Panc1 (cell line): ENCODE measurements at regions of chr20 and their contacts with region 1.

Region 1: GRCh38 chr20:1838556-1839279 is 56.5 kb upstream of the SIRPA start:
- DNase-seq: no peak
- ATAC-seq: no peak
- H3K4me3 ChIP-seq: no peak overlapping the region
- H3K27ac ChIP-seq: no peak overlapping the region
- H3K4me1 ChIP-seq: no peaks in the 10 kb centered on the region
- H3K27me3 ChIP-seq: no peaks in the 10 kb centered on the region
- CTCF ChIP-seq: no peak

Region 2: GRCh38 chr20:1685304-1686052 is 153.2 kb before region 1 on chr20:
- CTCF ChIA-PET with region 1: no interaction called
- POLR2A ChIA-PET with region 1: no interaction called
- in situ Hi-C with region 1: no loop called
- intact Hi-C with region 1: no loop called
- DNase-seq: no peak
- ATAC-seq: no peak
- H3K4me3 ChIP-seq: no peak overlapping the region
- H3K27ac ChIP-seq: no peak overlapping the region
- H3K4me1 ChIP-seq: no peaks in the 10 kb centered on the region
- H3K27me3 ChIP-seq: peaks cover 17% of the 10 kb centered on the region
- CTCF ChIP-seq: no peak

Region 3: GRCh38 chr20:1857466-1857865 is 18.7 kb after region 1 on chr20:
- CTCF ChIA-PET with region 1: no interaction called
- POLR2A ChIA-PET with region 1: interaction called, 10 read pairs
- in situ Hi-C with region 1: no loop called
- intact Hi-C with region 1: no loop called
- DNase-seq: no peak
- ATAC-seq: no peak
- H3K4me3 ChIP-seq: no peak overlapping the region
- H3K27ac ChIP-seq: no peak overlapping the region
- H3K4me1 ChIP-seq: no peaks in the 10 kb centered on the region
- H3K27me3 ChIP-seq: no peaks in the 10 kb centered on the region; the same call in 1 of the 2 replicates
- CTCF ChIP-seq: no peak

Region 4: GRCh38 chr20:2101057-2101864 is 262.5 kb after region 1 on chr20 and contains the start of gene STK35:
- CTCF ChIA-PET with region 1: no interaction called
- POLR2A ChIA-PET with region 1: no interaction called
- in situ Hi-C with region 1: no loop called
- intact Hi-C with region 1: no loop called
- DNase-seq: no peak
- ATAC-seq: peak; percentile 84
- H3K4me3 ChIP-seq: peak within 1 kb of the TSS; percentile 83 to 95
- H3K27ac ChIP-seq: peak within 1 kb of the TSS; percentile 98
- H3K4me1 ChIP-seq: peaks cover 21% of the 10 kb centered on the region
- H3K27me3 ChIP-seq: no peaks in the 10 kb centered on the region
- CTCF ChIP-seq: no peak
- total RNA-seq, gene STK35: 27.6 TPM